Activated CD4-positive, alpha-beta memory T cell treated with anti-CD3 and anti-CD28 coated beads for 36 hours (primary cell): ENCODE measurements at regions of chr15 and their contacts with region 1.

Region 1: GRCh38 chr15:67433495-67434099 is 87.3 kb upstream of the C15orf61 start:
- DNase-seq: peak; percentile 50
- H3K4me3 Mint-ChIP-seq: no peak overlapping the region
- H3K27ac Mint-ChIP-seq: no peak overlapping the region
- H3K4me1 Mint-ChIP-seq: no peaks in the 10 kb centered on the region
- H3K27me3 Mint-ChIP-seq: no peaks in the 10 kb centered on the region

Region 2: DNA sequence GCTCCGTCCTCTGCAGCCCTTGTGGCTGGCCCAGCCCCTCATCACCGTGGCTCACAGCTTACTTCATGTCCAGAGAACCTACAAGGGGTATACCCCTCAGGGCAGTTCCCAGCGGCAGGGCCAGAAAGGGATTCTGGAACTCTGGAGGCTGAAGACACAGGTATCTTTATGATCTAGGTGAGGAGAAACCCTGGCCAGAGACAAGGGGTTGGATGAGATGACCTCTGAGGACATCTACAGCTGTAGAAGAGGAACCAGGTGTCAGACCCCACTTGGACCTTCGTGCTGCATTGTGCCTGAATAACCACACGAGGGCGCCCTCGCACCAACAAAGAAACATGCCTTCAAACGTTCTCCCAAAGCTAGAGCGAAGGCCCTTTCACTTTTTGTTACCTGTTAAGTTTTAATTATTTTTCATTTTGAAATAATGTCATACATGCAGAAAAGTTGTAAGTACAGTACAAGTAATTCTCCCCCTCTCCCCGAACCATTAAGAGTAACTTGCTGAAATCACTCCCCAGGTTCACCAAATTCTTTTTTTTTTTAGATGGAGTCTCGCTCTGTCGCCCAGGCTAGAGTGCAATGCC is 486.9 kb before region 1 on chr15:
- CTCF ChIA-PET with region 1: interaction called, 72 read pairs
- POLR2A ChIA-PET with region 1: no interaction called
- intact Hi-C with region 1: loop called (anchors 1 kb)
- DNase-seq: peak; percentile 83
- H3K4me3 Mint-ChIP-seq: no peak overlapping the region
- H3K27ac Mint-ChIP-seq: no peak overlapping the region
- H3K4me1 Mint-ChIP-seq: peaks cover 6% of the 10 kb centered on the region
- H3K27me3 Mint-ChIP-seq: no peaks in the 10 kb centered on the region

Region 3: GRCh38 chr15:67335534-67336221 is 97.9 kb before region 1 on chr15:
- CTCF ChIA-PET with region 1: interaction called, 12 read pairs
- POLR2A ChIA-PET with region 1: no interaction called
- intact Hi-C with region 1: no loop called
- DNase-seq: no peak
- H3K4me3 Mint-ChIP-seq: no peak overlapping the region
- H3K27ac Mint-ChIP-seq: no peak overlapping the region
- H3K4me1 Mint-ChIP-seq: no peaks in the 10 kb centered on the region
- H3K27me3 Mint-ChIP-seq: no peaks in the 10 kb centered on the region

Region 4: DNA sequence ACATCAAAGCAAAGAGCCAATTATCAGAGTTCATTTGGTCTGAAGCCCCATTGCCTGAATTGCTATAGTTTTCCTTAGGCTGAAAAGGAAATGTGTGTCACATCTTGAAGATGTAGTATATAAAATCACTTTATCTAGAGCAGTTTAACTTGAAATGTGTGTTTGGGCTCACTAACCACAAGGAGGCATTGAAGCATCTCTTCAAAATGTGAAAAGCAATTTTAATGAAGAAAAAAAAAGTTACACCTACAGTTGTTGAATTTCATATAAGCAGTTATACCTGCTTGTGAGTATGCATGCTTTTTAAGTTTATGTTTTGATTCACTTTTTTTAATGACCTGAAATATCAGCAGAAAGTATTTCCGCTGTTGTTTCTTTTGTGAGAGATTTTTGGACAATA is 49.7 kb before region 1 on chr15:
- CTCF ChIA-PET with region 1: interaction called, 4 read pairs
- POLR2A ChIA-PET with region 1: no interaction called
- intact Hi-C with region 1: loop called (anchors 1 kb)
- DNase-seq: no peak
- H3K4me3 Mint-ChIP-seq: no peak overlapping the region
- H3K27ac Mint-ChIP-seq: no peak overlapping the region
- H3K4me1 Mint-ChIP-seq: no peaks in the 10 kb centered on the region
- H3K27me3 Mint-ChIP-seq: peaks cover 3% of the 10 kb centered on the region